ENCODE measurements at regions of chr21 and their contacts with region 1.

Region 1: GRCh38 chr21:37366482-37367316 is at the start of gene DYRK1A:
- DNase-seq: peak; percentile 99
- H3K4me3 ChIP-seq: peak within 1 kb of the TSS; percentile 88 to 92 (median 92)
- H3K27ac ChIP-seq: peak within 1 kb of the TSS; percentile 96
- H3K4me1 ChIP-seq: peaks cover 26% of the 10 kb centered on the region
- H3K27me3 ChIP-seq: no peaks in the 10 kb centered on the region
- CTCF ChIP-seq: no peak
- total RNA-seq, gene DYRK1A: 42.5 to 73.2 TPM

Region 2: DNA sequence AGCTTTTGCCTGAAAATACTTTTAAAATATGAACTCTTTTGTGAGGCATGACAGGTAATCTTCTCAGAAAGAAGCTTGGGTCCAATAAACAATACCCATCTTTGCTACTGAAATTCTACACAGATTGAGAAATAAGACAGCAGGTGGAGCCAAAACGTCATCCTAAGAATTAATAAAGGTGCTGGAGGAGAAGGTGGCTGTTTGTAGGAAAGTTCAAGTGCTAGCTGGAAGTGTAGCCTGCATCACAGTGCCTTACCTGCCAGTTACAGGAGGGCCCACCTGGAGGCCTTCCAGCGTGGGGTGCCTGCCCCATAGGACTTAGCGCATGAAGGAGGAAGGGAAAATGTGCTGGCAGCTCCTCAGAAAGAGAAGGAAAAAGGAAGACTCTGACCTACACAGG is 200.0 kb before region 1 on chr21:
- CTCF ChIA-PET with region 1: interaction called, 4 read pairs
- dilution Hi-C with region 1: no loop called
- in situ Hi-C with region 1: no loop called
- intact Hi-C with region 1: loop called (anchors 2 kb)
- DNase-seq: peak; percentile 21
- H3K4me3 ChIP-seq: no peak overlapping the region
- H3K27ac ChIP-seq: no peak overlapping the region
- H3K4me1 ChIP-seq: no peaks in the 10 kb centered on the region
- H3K27me3 ChIP-seq: no peaks in the 10 kb centered on the region
- CTCF ChIP-seq: peak; percentile 15 to 32

Region 3: DNA sequence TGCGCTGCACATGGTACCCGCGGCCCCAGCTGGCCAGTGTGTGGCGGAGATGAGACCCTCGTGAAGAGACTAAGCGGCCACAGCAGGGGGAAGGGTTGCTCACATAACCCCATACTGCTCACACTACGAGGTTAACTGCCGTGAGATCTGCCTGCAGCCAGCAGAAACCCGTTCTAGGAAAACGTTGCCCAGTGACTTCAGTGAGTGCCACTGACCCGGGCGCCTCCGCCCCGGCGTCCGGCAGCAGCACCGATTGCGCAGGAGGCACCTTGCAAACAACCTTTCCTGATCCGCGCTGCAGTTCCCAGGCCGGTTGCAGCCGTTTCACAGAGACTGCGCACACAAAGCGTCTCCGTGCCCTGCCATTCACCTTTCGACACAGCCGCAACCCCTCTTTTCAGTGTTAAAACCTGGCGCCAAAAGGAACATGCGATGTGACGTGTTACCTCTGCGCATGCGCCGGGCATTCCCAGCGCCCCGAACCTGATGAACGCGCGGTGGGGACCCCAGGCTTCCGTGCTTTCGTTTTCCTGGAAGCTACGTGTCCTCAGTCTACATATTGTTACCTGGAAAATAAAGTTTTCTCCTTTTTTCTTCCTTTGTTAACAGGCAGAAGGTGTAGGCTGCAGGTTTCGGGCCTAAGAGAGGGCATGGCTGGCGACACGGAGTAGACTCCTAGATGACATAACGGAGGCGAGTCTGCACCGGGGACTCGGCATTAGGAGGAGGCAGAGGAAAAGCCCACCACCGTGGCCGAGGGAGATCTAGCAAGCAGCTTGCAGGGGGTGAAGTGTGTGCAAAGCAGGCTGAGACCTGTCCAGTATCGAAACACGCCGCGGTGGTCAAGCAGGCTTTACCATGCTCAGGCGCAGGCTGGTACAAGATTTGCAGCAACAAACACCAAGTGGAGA is 108.5 kb before region 1 on chr21:
- CTCF ChIA-PET with region 1: no interaction called
- dilution Hi-C with region 1: loop called (anchors 5 kb)
- in situ Hi-C with region 1: loop called in 1 of 2 experiments (anchors 25 kb)
- intact Hi-C with region 1: no loop called
- DNase-seq: peak; percentile 81
- H3K4me3 ChIP-seq: peak overlapping the region; percentile 54 to 65 (median 62)
- H3K27ac ChIP-seq: peak overlapping the region; percentile 97
- H3K4me1 ChIP-seq: peaks cover 27% of the 10 kb centered on the region
- H3K27me3 ChIP-seq: no peaks in the 10 kb centered on the region
- CTCF ChIP-seq: no peak

Region 4: GRCh38 chr21:37338671-37339551 is 27.8 kb before region 1 on chr21:
- CTCF ChIA-PET with region 1: no interaction called
- dilution Hi-C with region 1: no loop called
- in situ Hi-C with region 1: no loop called
- intact Hi-C with region 1: loop called (anchors 1 kb)
- DNase-seq: peak; percentile 89
- H3K4me3 ChIP-seq: no peak overlapping the region
- H3K27ac ChIP-seq: peak overlapping the region; percentile 88
- H3K4me1 ChIP-seq: peaks cover 36% of the 10 kb centered on the region
- H3K27me3 ChIP-seq: no peaks in the 10 kb centered on the region
- CTCF ChIP-seq: no peak

Region 5: DNA sequence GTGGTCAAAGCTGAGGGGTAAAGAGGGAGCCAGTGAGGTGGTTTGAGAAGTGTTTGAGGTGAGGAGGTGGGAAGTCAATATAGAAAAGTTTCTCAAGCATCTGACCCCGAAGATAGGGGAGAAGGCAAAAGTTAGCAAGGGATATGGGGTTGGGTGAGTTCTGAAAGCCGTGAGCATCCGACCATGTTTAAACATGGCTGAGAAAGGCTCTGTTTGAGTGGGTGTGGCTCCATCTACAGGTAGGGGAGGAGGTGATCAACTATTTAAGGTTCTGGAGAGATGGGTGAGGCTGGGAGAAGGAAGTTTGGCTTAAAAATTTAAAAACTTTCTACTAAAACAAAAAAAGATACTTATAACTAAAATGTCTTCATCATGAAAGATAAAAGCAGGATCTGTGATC is 275.8 kb after region 1 on chr21:
- CTCF ChIA-PET with region 1: no interaction called
- dilution Hi-C with region 1: no loop called
- in situ Hi-C with region 1: no loop called
- intact Hi-C with region 1: loop called (anchors 10 kb)
- DNase-seq: peak; percentile 36
- H3K4me3 ChIP-seq: no peak overlapping the region
- H3K27ac ChIP-seq: no peak overlapping the region
- H3K4me1 ChIP-seq: peaks cover 9% of the 10 kb centered on the region
- H3K27me3 ChIP-seq: no peaks in the 10 kb centered on the region
- CTCF ChIP-seq: peak; percentile 36 to 58

Measured in mammary epithelial cell (primary cell).